ENCODE measurements at regions of chr16 and their contacts with region 1.

Region 1: DNA sequence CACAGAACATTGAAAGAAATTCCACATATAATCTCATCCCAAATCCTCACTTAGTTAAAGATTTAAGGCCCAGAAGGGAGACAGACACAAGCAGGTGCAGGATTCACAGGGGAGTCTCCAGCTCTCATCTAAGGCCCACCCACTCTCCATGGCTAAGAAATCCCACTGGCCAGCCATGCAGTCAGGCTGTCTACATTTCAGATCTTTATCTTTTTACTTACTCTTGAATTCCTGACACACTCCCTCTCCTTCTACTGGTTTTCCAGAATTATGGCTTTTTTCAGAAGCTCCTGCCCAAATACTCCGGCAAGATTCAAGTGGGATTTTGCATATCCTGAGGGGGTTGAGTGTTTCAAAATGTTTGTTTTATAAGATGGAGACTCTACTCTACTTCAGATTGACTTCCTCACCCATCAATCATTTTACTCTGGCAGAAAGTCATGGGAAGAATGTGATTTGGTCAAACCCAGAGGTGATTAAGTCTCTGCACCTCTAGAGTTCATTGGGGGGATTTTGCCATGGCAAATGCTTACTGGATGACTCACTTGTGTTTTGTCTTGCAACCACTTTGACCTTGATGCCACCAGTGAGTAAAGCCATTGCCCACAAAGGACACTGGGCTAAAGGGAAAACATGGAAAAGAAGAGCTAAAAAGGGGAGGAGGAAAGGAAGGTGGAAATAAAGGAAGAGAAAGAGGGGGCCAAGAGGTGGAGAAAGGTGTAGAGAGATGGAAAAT is 688.8 kb upstream of the SALL1 start:
- DNase-seq: no peak
- ATAC-seq: no peak
- H3K4me3 ChIP-seq: no peak overlapping the region
- H3K27ac ChIP-seq: no peak overlapping the region
- H3K4me1 ChIP-seq: no peaks in the 10 kb centered on the region
- H3K27me3 ChIP-seq: no peaks in the 10 kb centered on the region
- CTCF ChIP-seq: no peak
- POLR2A ChIP-seq: no peak

Region 2: GRCh38 chr16:51592001-51592501 is 247.8 kb before region 1 on chr16:
- in situ Hi-C with region 1: no loop called
- intact Hi-C with region 1: no loop called
- DNase-seq: no peak
- ATAC-seq: no peak
- H3K4me3 ChIP-seq: no peak overlapping the region
- H3K27ac ChIP-seq: no peak overlapping the region
- H3K4me1 ChIP-seq: no peaks in the 10 kb centered on the region
- H3K27me3 ChIP-seq: no peaks in the 10 kb centered on the region
- CTCF ChIP-seq: no peak
- POLR2A ChIP-seq: no peak

Region 3: GRCh38 chr16:51939378-51939871 is 99.5 kb after region 1 on chr16:
- in situ Hi-C with region 1: loop called in 1 of 4 experiments (anchors 25 kb)
- intact Hi-C with region 1: no loop called
- DNase-seq: no peak
- ATAC-seq: no peak
- H3K4me3 ChIP-seq: no peak overlapping the region
- H3K27ac ChIP-seq: no peak overlapping the region
- H3K4me1 ChIP-seq: no peaks in the 10 kb centered on the region
- H3K27me3 ChIP-seq: no peaks in the 10 kb centered on the region
- CTCF ChIP-seq: no peak
- POLR2A ChIP-seq: no peak